Heart right ventricle (tissue), 16 donors: ENCODE measurements at regions of chr1 and their contacts with region 1.

Region 1: GRCh38 chr1:116987256-116987555 is 14.4 kb upstream of the CD101 start:
- DNase-seq: no peak
- ATAC-seq: no peak
- H3K4me3 ChIP-seq: peak overlapping the region in 1 of 10 donors; percentile 8
- H3K27ac ChIP-seq: peak overlapping the region in 3 of 10 donors; percentile 23 to 85 (median 71)
- H3K4me1 ChIP-seq: peaks cover 0 to 72% (median 56%) of the 10 kb centered on the region in 9 donors
- H3K27me3 ChIP-seq: no peaks in the 10 kb centered on the region
- CTCF ChIP-seq: no peak

Region 2: DNA sequence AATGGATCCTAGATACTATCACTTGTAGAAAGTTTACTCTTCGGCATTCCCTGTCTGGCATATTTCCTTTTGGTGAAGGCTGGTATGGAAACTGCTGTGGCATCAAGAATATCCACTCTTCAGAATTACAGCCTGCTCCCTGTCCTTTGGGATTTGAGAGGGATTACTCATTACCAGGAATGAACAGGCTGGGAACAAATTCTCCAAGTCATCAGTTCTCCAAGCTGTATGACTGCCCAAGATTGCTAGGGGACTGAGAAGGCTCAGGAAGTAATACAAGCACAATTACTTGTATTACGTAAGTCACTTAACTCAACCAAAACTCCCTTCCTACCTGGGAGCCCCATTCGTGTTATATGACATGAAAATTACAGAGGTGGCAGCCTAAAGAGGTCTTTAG is 466.0 kb before region 1 on chr1:
- intact Hi-C with region 1: no loop called
- DNase-seq: no peak
- ATAC-seq: peak in 4 of 8 donors; percentile 30 to 62 (median 50)
- H3K4me3 ChIP-seq: no peak overlapping the region
- H3K27ac ChIP-seq: no peak overlapping the region
- H3K4me1 ChIP-seq: peaks cover 0 to 12% (median 0%) of the 10 kb centered on the region in 9 donors
- H3K27me3 ChIP-seq: no peaks in the 10 kb centered on the region
- CTCF ChIP-seq: no peak

Region 3: DNA sequence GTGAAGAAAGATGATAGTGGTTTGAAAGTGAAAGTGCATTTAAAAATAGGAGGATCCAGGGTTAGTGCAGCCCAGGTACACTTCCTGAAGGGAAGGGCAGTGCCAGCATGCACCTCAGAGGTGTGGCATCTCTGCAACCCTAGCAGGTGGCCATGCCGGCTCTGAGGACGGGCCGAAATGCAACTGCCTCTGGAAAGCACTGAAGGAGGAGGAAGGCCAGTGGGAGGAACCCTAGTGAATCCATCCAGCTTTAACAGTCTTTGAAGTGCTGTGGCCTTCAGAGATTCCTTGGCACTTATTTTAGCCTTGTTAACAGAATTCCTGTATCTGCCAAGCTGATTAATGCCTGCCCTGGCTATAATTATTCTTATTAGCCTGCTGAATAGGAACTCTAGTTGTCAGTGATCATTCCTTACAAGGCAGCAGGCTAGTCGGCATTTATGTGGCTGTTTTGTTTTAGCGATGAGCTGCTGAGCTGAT is 72.0 kb before region 1 on chr1:
- intact Hi-C with region 1: loop called in 5 of 10 experiments (anchors 1 to 10 kb)
- DNase-seq: peak in 1 of 2 donors; percentile 41
- ATAC-seq: peak; percentile 34 to 76 (median 60)
- H3K4me3 ChIP-seq: peak overlapping the region in 8 of 10 donors; percentile 9 to 40 (median 26)
- H3K27ac ChIP-seq: peak overlapping the region; percentile 26 to 97 (median 80)
- H3K4me1 ChIP-seq: peaks cover 11 to 95% (median 54%) of the 10 kb centered on the region in 9 donors
- H3K27me3 ChIP-seq: peaks cover 0 to 23% (median 0%) of the 10 kb centered on the region in 7 donors
- CTCF ChIP-seq: no peak

Region 4: GRCh38 chr1:117045644-117046043 is 58.4 kb after region 1 on chr1:
- intact Hi-C with region 1: loop called in 2 of 10 experiments (anchors 10 kb)
- DNase-seq: no peak
- ATAC-seq: no peak
- H3K4me3 ChIP-seq: no peak overlapping the region
- H3K27ac ChIP-seq: peak overlapping the region in 1 of 10 donors; percentile 25
- H3K4me1 ChIP-seq: peaks cover 0 to 21% (median 0%) of the 10 kb centered on the region in 9 donors
- H3K27me3 ChIP-seq: no peaks in the 10 kb centered on the region
- CTCF ChIP-seq: no peak

Region 5: GRCh38 chr1:117161898-117162297 is 174.7 kb after region 1 on chr1:
- intact Hi-C with region 1: no loop called
- DNase-seq: no peak
- ATAC-seq: no peak
- H3K4me3 ChIP-seq: no peak overlapping the region
- H3K27ac ChIP-seq: no peak overlapping the region
- H3K4me1 ChIP-seq: peaks cover 0 to 7% (median 0%) of the 10 kb centered on the region in 9 donors
- H3K27me3 ChIP-seq: no peaks in the 10 kb centered on the region
- CTCF ChIP-seq: no peak